HCT116 (cell line): ENCODE measurements at regions of chr15 and their contacts with region 1.

Region 1: GRCh38 chr15:44215594-44215993 is 20.5 kb upstream of the FRMD5 start:
- DNase-seq: peak; percentile 85
- ATAC-seq: peak; percentile 75
- H3K4me3 ChIP-seq: peak overlapping the region in 1 of 2 experiments; percentile 27; a peak in 1 of 4 replicates
- H3K27ac ChIP-seq: peak overlapping the region; percentile 73; the same call in 1 of the 2 replicates
- H3K4me1 ChIP-seq: peaks cover 18 to 56% of the 10 kb centered on the region in 2 experiments
- H3K27me3 ChIP-seq: no peaks in the 10 kb centered on the region
- CTCF ChIP-seq: no peak
- POLR2A ChIP-seq: no peak
- RAD21 ChIP-seq: peak; percentile 8; the same call in 1 of the 2 replicates

Region 2: DNA sequence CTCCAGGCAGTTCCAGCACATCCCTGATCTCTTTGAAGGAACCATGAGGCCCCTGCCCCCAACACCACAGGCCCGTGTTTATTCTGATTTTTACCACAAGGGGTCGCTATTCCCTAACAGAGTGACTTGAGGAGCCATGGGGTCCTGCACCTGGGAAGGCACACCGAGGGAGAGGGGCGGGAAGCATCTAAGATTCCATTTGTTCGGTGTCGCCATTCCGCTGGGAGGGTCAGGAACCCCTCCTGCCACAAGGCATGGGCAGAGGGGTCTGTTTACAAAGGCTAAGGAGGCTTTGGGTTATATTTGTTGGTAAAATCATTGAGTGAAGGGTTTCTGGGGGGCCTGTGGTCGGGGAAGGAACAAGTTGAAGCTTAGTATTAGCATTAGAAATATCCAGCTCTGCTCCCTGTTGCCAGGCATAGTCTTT is 311.7 kb before region 1 on chr15:
- CTCF ChIA-PET with region 1: interaction called, 6 read pairs
- POLR2A ChIA-PET with region 1: no interaction called
- RAD21 ChIA-PET with region 1: no interaction called
- intact Hi-C with region 1: loop called (anchors 1 kb)
- DNase-seq: peak; percentile 56
- ATAC-seq: peak; percentile 93
- H3K4me3 ChIP-seq: no peak overlapping the region
- H3K27ac ChIP-seq: no peak overlapping the region
- H3K4me1 ChIP-seq: no peaks in the 10 kb centered on the region; a peak in 2 of 4 replicates
- H3K27me3 ChIP-seq: no peaks in the 10 kb centered on the region
- CTCF ChIP-seq: peak; percentile 76 to 94 (median 82)
- POLR2A ChIP-seq: no peak
- RAD21 ChIP-seq: peak; percentile 95

Region 3: GRCh38 chr15:44066316-44066740 is 149.3 kb before region 1 on chr15:
- CTCF ChIA-PET with region 1: no interaction called
- POLR2A ChIA-PET with region 1: no interaction called
- RAD21 ChIA-PET with region 1: no interaction called
- intact Hi-C with region 1: loop called (anchors 2 kb)
- DNase-seq: peak; percentile 68
- ATAC-seq: peak; percentile 93
- H3K4me3 ChIP-seq: no peak overlapping the region; a peak in 1 of 4 replicates
- H3K27ac ChIP-seq: no peak overlapping the region
- H3K4me1 ChIP-seq: peaks cover 0 to 15% of the 10 kb centered on the region in 2 experiments; a peak in 3 of 4 replicates
- H3K27me3 ChIP-seq: no peaks in the 10 kb centered on the region
- CTCF ChIP-seq: peak; percentile 72 to 94 (median 78)
- POLR2A ChIP-seq: no peak
- RAD21 ChIP-seq: peak; percentile 82

Region 4: GRCh38 chr15:44157685-44158099 is 57.9 kb before region 1 on chr15:
- CTCF ChIA-PET with region 1: no interaction called
- POLR2A ChIA-PET with region 1: no interaction called
- RAD21 ChIA-PET with region 1: no interaction called
- intact Hi-C with region 1: loop called (anchors 2 kb)
- DNase-seq: peak; percentile 96
- ATAC-seq: peak; percentile 79
- H3K4me3 ChIP-seq: peak overlapping the region in 1 of 2 experiments; percentile 39; a peak in 2 of 4 replicates
- H3K27ac ChIP-seq: peak overlapping the region; percentile 98
- H3K4me1 ChIP-seq: peaks cover 72 to 93% of the 10 kb centered on the region in 2 experiments
- H3K27me3 ChIP-seq: no peaks in the 10 kb centered on the region
- CTCF ChIP-seq: no peak
- POLR2A ChIP-seq: no peak
- RAD21 ChIP-seq: peak; percentile 38; the same call in 1 of the 2 replicates

Region 5: DNA sequence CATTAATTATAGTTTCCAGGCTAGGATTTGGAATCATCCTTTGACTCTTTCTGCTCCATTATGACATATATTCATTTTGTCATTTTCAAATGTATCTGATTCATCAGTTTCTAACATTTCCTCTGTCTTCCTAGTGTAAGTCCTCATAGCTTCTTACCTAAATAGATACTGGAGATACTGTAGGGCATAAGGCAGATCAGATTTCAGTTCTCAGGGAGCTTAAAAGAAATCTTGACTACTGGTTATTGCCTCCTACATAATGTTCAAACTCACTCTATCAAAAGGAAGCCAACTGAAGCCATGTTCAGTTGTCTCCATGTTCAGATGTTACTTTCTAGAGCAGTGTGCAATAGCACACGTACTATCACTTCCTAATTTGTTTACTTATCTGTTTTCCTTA is 182.3 kb after region 1 on chr15:
- CTCF ChIA-PET with region 1: no interaction called
- POLR2A ChIA-PET with region 1: no interaction called
- RAD21 ChIA-PET with region 1: no interaction called
- intact Hi-C with region 1: no loop called
- DNase-seq: no peak
- ATAC-seq: no peak
- H3K4me3 ChIP-seq: no peak overlapping the region
- H3K27ac ChIP-seq: no peak overlapping the region
- H3K4me1 ChIP-seq: no peaks in the 10 kb centered on the region
- H3K27me3 ChIP-seq: no peaks in the 10 kb centered on the region
- CTCF ChIP-seq: no peak
- POLR2A ChIP-seq: no peak
- RAD21 ChIP-seq: no peak